ENCODE measurements at regions of chr5 and their contacts with region 1.

Region 1: DNA sequence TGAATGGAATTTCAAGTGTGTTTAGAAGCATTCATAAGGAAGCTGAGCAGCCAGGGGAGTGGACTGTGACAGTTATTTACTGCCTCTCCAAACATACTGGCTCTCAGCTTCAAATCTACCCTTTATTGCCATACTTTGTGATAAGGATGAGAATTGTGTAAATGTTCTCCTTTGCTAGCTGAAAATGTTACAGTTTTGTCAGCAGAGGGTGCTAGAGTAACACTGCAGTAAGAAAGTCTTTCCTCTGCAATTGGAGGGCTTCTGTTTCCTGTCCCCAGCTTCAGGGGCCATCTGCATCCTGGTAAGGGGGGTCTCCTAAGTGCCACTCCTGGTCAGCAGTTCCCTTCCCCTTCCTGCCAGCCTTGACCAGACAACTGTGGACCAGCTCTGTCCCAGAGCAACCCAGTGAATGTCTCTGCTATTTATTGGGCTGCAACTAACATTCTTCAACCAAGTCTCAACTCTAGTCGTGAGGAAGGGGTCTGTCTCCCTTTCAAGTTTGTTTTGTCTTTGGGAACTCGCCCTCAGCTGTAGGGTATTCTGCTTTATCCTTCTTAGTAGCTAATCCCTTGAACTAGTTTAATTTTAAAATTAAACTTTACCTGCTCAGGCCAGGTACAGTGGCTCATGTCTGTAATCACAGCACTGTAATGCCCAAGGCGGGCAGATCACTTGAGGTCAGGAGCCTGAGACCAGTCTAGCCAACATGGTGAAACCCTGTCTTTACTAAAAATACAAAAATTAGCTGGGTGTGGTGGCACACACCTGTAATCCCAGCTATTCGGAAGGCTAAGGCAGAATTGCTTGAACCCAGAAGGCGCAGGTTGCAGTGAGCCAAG is 45.3 kb downstream of the RAPGEF6 start:
- DNase-seq: peak; percentile 55
- CTCF ChIP-seq: peak; percentile 72

Region 2: GRCh38 chr5:131305906-131306305 is 283.8 kb before region 1 on chr5:
- CTCF ChIA-PET with region 1: no interaction called
- POLR2A ChIA-PET with region 1: no interaction called
- DNase-seq: no peak
- CTCF ChIP-seq: no peak

Region 3: GRCh38 chr5:131613423-131613822 is 23.7 kb after region 1 on chr5:
- CTCF ChIA-PET with region 1: interaction called, 11 read pairs
- POLR2A ChIA-PET with region 1: no interaction called
- DNase-seq: no peak
- CTCF ChIP-seq: no peak

Region 4: DNA sequence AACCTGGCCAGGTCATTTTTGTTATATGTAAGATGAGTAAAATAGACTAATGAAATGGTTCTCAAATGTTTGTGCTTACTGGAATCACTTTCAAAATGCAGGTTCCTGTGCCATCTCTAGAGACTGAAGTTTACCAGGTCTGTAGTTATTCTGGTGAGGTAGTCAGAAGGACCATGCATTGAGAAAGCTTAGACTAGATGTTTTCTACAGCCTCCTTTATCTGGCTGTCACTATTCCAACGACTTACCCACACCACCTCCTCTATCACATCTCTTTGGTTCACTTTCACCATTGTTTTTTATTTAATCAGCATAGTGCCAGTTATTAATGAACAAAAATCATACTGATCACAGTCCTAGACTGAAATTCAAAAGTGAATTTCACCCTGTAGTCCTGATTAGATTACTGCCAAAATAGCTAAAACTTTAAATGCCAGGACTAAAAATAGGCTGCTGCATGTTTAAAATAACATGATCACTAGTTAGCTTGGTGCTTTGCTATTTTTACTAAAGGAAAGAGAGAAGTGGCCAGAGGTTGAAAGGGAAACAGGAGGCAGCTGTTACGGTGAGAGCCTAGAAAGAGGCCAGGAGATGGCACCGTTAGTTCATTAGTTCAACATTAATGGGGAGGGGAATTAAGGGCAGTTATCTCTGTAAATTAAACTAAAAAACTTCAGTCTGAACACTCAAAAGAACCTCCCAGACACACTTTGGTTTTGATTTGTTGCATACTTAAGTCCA is 221.0 kb after region 1 on chr5:
- CTCF ChIA-PET with region 1: interaction called, 10 read pairs
- POLR2A ChIA-PET with region 1: no interaction called
- DNase-seq: peak; percentile 52
- CTCF ChIP-seq: peak; percentile 58

Region 5: GRCh38 chr5:132007399-132008165 is 417.9 kb after region 1 on chr5:
- CTCF ChIA-PET with region 1: interaction called, 191 read pairs
- POLR2A ChIA-PET with region 1: no interaction called
- DNase-seq: peak; percentile 75
- CTCF ChIP-seq: peak; percentile 62

Measured in GM10248 (cell line).